A549 (cell line): ENCODE measurements at regions of chr17 and their contacts with region 1.

Region 1: GRCh38 chr17:9924735-9925191 is 19.7 kb upstream of the RCVRN start:
- DNase-seq: peak; percentile 78 to 87
- ATAC-seq: peak; percentile 76 to 86
- H3K4me3 ChIP-seq: no peak overlapping the region
- H3K27ac ChIP-seq: peak overlapping the region; percentile 47 to 82
- H3K4me1 ChIP-seq: peaks cover 38% of the 10 kb centered on the region
- CTCF ChIP-seq: peak; percentile 90
- EP300 ChIP-seq: no peak
- POLR2A ChIP-seq: no peak
- RAD21 ChIP-seq: peak; percentile 92 to 94

Region 2: DNA sequence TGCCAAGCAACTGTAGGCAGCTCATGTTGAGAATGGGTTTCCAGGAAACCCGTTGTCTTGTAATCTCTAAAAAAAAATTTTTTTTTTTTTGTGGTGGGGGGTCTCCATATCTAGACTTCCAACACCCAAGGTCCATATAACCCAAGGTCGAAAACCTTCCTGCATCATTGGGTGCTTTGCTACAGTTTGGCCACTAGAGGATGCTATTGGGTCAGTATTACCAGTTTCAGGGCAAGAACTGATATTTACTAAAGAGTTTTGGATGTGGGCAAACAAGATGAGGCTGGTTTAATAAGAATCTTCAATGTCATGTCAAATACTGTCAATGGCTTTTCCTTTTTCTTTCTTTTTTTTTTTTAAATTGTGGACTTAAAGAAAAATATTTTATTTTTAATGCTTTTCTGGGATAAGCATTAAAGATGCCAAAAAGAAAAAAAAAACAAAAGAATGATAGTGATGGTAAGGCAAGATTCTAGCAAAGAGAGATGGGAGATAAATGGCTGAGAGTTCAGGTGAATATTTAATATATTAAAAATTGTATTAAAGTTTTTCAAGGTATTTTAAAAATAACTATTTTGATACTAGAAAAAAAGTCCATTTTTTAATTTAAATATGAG is 195.6 kb before region 1 on chr17:
- CTCF ChIA-PET with region 1: interaction called, 344 read pairs
- POLR2A ChIA-PET with region 1: no interaction called
- DNase-seq: peak; percentile 78 to 83
- ATAC-seq: peak; percentile 54 to 77; a peak in 4 of 6 replicates
- H3K4me3 ChIP-seq: no peak overlapping the region
- H3K27ac ChIP-seq: peak overlapping the region; percentile 62 to 84
- H3K4me1 ChIP-seq: peaks cover 13% of the 10 kb centered on the region
- CTCF ChIP-seq: peak; percentile 100
- EP300 ChIP-seq: no peak
- POLR2A ChIP-seq: no peak
- RAD21 ChIP-seq: peak; percentile 99 to 100

Region 3: GRCh38 chr17:9802305-9803096 is 122.3 kb before region 1 on chr17:
- CTCF ChIA-PET with region 1: interaction called, 12 read pairs
- POLR2A ChIA-PET with region 1: no interaction called
- DNase-seq: peak; percentile 70 to 90
- ATAC-seq: peak; percentile 89 to 92
- H3K4me3 ChIP-seq: peak overlapping the region; percentile 10; the same call in 1 of the 3 replicates
- H3K27ac ChIP-seq: peak overlapping the region; percentile 89 to 90
- H3K4me1 ChIP-seq: peaks cover 15% of the 10 kb centered on the region
- CTCF ChIP-seq: peak; percentile 18; the same call in 1 of the 3 replicates
- EP300 ChIP-seq: no peak
- POLR2A ChIP-seq: no peak
- RAD21 ChIP-seq: peak; percentile 35 to 48; a peak in 4 of 5 replicates

Region 4: GRCh38 chr17:9900784-9901183 is 24.0 kb before region 1 on chr17:
- CTCF ChIA-PET with region 1: interaction called, 22 read pairs
- POLR2A ChIA-PET with region 1: no interaction called
- DNase-seq: no peak
- ATAC-seq: peak in 1 of 2 experiments; percentile 58; a peak in 3 of 6 replicates
- H3K4me3 ChIP-seq: no peak overlapping the region
- H3K27ac ChIP-seq: peak overlapping the region; percentile 57 to 75
- H3K4me1 ChIP-seq: peaks cover 19% of the 10 kb centered on the region
- CTCF ChIP-seq: no peak
- EP300 ChIP-seq: no peak
- POLR2A ChIP-seq: no peak
- RAD21 ChIP-seq: no peak

Region 5: GRCh38 chr17:9937241-9937761 is 12.5 kb after region 1 on chr17:
- CTCF ChIA-PET with region 1: interaction called, 155 read pairs
- POLR2A ChIA-PET with region 1: no interaction called
- DNase-seq: no peak
- ATAC-seq: peak; percentile 30 to 31; a peak in 4 of 6 replicates
- H3K4me3 ChIP-seq: no peak overlapping the region
- H3K27ac ChIP-seq: no peak overlapping the region
- H3K4me1 ChIP-seq: peaks cover 5% of the 10 kb centered on the region; the same call in 2 of the 3 replicates
- CTCF ChIP-seq: no peak
- EP300 ChIP-seq: no peak
- POLR2A ChIP-seq: no peak
- RAD21 ChIP-seq: no peak

Region 6: DNA sequence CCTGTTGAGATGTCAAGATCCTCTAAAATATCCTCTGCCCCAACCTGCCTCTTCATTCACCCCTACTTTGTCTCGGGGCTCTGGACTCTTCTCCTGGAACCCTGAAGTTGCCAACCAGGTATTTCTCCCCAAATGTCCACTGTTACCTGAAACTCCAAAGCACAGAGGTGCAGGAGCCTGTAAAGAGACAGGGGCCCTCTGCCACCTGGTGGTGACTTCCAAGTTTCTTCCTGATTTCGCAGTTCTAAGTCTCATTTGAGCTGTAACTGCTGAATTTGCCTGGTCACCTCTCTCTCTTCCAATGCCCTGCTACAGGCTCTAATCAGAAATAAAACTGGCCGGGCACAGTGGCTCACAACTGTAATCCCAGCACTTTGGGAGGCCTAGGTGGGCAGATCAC is 57.4 kb after region 1 on chr17:
- CTCF ChIA-PET with region 1: interaction called, 17 read pairs
- POLR2A ChIA-PET with region 1: no interaction called
- DNase-seq: peak; percentile 53
- ATAC-seq: peak; percentile 72 to 76; a peak in 4 of 6 replicates
- H3K4me3 ChIP-seq: no peak overlapping the region
- H3K27ac ChIP-seq: no peak overlapping the region
- H3K4me1 ChIP-seq: peaks cover 16% of the 10 kb centered on the region
- CTCF ChIP-seq: peak; percentile 45; the same call in 2 of the 3 replicates
- EP300 ChIP-seq: no peak
- POLR2A ChIP-seq: no peak
- RAD21 ChIP-seq: peak; percentile 65 to 66